ENCODE measurements at regions of chr14 and their contacts with region 1.

Region 1: GRCh38 chr14:103688906-103689902 is 26.0 kb downstream of the XRCC3 start:
- DNase-seq: peak; percentile 75
- H3K4me3 ChIP-seq: peak overlapping the region; percentile 60
- H3K27ac ChIP-seq: peak overlapping the region; percentile 91
- H3K4me1 ChIP-seq: peaks cover 57% of the 10 kb centered on the region
- CTCF ChIP-seq: no peak

Region 2: GRCh38 chr14:102474934-102475333 is 1214.3 kb before region 1 on chr14:
- CTCF ChIA-PET with region 1: no interaction called
- POLR2A ChIA-PET with region 1: no interaction called
- intact Hi-C with region 1: no loop called
- DNase-seq: no peak
- H3K4me3 ChIP-seq: no peak overlapping the region
- H3K27ac ChIP-seq: no peak overlapping the region
- H3K4me1 ChIP-seq: no peaks in the 10 kb centered on the region
- CTCF ChIP-seq: no peak

Region 3: DNA sequence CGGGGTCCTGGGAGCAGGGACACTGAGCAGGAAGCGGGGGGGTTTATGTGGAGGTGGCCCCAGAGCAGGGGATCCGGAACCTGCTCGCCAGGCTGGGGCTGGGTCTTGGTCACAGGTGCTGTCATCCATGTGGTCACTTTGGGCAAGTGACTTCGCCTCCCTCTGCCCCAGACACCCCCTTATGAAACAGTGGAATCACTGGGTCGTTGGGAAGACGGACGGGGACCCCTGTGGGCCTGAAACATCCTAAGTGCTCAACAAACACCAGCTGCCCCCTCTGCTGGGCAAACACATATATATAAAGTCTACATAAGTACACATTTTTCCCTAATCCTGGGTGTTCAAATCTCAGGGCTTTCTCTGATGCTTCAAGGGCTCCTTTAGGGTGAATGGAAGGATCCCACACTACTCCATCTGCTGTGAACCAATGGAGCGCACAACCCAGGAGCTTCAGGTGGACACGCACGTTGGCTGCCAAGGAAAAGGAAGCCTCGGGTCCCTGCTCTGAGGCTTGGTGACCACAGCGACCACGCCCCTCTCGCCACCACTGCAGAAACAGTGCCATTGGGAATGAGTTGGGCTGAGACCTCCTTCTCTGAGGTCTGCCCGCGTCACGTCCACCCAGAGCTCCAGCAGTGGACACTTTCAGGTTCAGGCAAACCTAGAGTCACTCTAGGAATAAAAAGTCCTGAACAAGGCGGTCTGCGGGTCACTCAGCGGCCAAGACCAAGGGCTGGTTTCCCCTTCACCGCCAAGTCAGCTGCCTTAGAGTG is 686.4 kb before region 1 on chr14:
- CTCF ChIA-PET with region 1: no interaction called
- POLR2A ChIA-PET with region 1: no interaction called
- intact Hi-C with region 1: no loop called
- DNase-seq: peak; percentile 51
- H3K4me3 ChIP-seq: no peak overlapping the region
- H3K27ac ChIP-seq: no peak overlapping the region
- H3K4me1 ChIP-seq: no peaks in the 10 kb centered on the region
- CTCF ChIP-seq: peak; percentile 65

Region 4: DNA sequence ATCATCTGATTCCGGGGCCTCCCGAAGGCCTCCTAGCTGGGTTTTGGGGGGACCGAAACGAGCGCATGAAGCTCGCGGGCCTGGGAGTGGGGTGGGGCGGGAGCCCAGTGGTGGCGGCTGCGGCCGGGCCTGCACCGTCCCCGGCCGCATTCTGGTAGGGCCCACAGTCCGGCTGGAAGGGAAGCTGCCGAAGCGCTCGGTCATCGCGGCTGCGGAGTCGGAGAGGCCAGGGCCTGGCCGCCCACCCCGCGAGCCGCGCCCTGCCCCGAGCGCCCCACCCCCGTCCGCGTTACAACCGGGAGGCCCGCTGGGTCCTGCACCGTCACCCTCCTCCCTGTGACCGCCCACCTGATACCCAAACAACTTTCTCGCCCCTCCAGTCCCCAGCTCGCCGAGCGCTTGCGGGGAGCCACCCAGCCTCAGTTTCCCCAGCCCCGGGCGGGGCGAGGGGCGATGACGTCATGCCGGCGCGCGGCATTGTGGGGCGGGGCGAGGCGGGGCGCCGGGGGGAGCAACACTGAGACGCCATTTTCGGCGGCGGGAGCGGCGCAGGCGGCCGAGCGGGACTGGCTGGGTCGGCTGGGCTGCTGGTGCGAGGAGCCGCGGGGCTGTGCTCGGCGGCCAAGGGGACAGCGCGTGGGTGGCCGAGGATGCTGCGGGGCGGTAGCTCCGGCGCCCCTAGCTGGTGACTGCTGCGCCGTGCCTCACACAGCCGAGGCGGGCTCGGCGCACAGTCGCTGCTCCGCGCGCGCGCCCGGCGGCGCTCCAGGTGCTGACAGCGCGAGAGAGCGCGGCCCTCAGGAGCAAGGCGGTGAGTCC is 60.3 kb before region 1 on chr14 and contains the start of gene KLC1:
- CTCF ChIA-PET with region 1: no interaction called
- POLR2A ChIA-PET with region 1: no interaction called
- intact Hi-C with region 1: loop called (anchors 1 kb)
- DNase-seq: peak; percentile 79
- H3K4me3 ChIP-seq: peak within 1 kb of the TSS; percentile 90
- H3K27ac ChIP-seq: peak within 1 kb of the TSS; percentile 57
- H3K4me1 ChIP-seq: peaks cover 53% of the 10 kb centered on the region
- CTCF ChIP-seq: no peak
- total RNA-seq, gene KLC1: 157 and 204 TPM in 2 replicates

Region 5: GRCh38 chr14:103715052-103716000 is 26.1 kb after region 1 on chr14 and contains the starts of genes XRCC3 and ZFYVE21:
- CTCF ChIA-PET with region 1: no interaction called
- POLR2A ChIA-PET with region 1: interaction called, 5 read pairs
- intact Hi-C with region 1: loop called (anchors 1 kb)
- DNase-seq: peak; percentile 99
- H3K4me3 ChIP-seq: peak within 1 kb of the TSS; percentile 88
- H3K27ac ChIP-seq: peak within 1 kb of the TSS; percentile 60
- H3K4me1 ChIP-seq: peaks cover 57% of the 10 kb centered on the region
- CTCF ChIP-seq: no peak
- total RNA-seq, gene XRCC3: 83.6 and 130 TPM in 2 replicates
- total RNA-seq, gene ZFYVE21: 16.6 and 22.5 TPM in 2 replicates

Region 6: GRCh38 chr14:103748534-103748857 is 59.3 kb after region 1 on chr14:
- CTCF ChIA-PET with region 1: no interaction called
- POLR2A ChIA-PET with region 1: no interaction called
- intact Hi-C with region 1: loop called (anchors 1 kb)
- DNase-seq: peak; percentile 92
- H3K4me3 ChIP-seq: peak overlapping the region; percentile 8
- H3K27ac ChIP-seq: peak overlapping the region; percentile 56
- H3K4me1 ChIP-seq: peaks cover 46% of the 10 kb centered on the region
- CTCF ChIP-seq: 0 out of 2 replicates have a peak, but pooled peaks have one; percentile 32

Region 7: GRCh38 chr14:103840014-103840413 is 150.8 kb after region 1 on chr14:
- CTCF ChIA-PET with region 1: no interaction called
- POLR2A ChIA-PET with region 1: no interaction called
- intact Hi-C with region 1: no loop called
- DNase-seq: no peak
- H3K4me3 ChIP-seq: no peak overlapping the region
- H3K27ac ChIP-seq: no peak overlapping the region
- H3K4me1 ChIP-seq: no peaks in the 10 kb centered on the region
- CTCF ChIP-seq: no peak